H1 (cell line): ENCODE measurements at regions of chr2 and their contacts with region 1.

Region 1: GRCh38 chr2:202238234-202239197 is at the start of gene SUMO1:
- DNase-seq: peak; percentile 82 to 95
- H3K4me3 ChIP-seq: peak within 1 kb of the TSS; percentile 81 to 99 (median 98)
- H3K27ac ChIP-seq: peak within 1 kb of the TSS; percentile 96
- H3K4me1 ChIP-seq: peaks cover 0 to 3% (median 0%) of the 10 kb centered on the region in 4 experiments; a peak in 3 of 7 replicates
- H3K27me3 ChIP-seq: no peaks in the 10 kb centered on the region
- CTCF ChIP-seq: no peak
- EP300 ChIP-seq: no peak
- POLR2A ChIP-seq: peak; percentile 84 to 99
- RAD21 ChIP-seq: no peak
- total RNA-seq, gene SUMO1: 232 and 238 TPM in 2 replicates

Region 2: GRCh38 chr2:202221873-202222272 is 16.6 kb before region 1 on chr2:
- CTCF ChIA-PET with region 1: interaction called, 6 read pairs
- POLR2A ChIA-PET with region 1: interaction called, 19 read pairs
- DNase-seq: no peak
- H3K4me3 ChIP-seq: no peak overlapping the region
- H3K27ac ChIP-seq: no peak overlapping the region
- H3K4me1 ChIP-seq: peaks cover 0 to 3% (median 0%) of the 10 kb centered on the region in 4 experiments; a peak in 2 of 7 replicates
- H3K27me3 ChIP-seq: no peaks in the 10 kb centered on the region
- CTCF ChIP-seq: no peak
- EP300 ChIP-seq: no peak
- POLR2A ChIP-seq: no peak
- RAD21 ChIP-seq: no peak

Region 3: GRCh38 chr2:202249521-202249850 is 11.0 kb after region 1 on chr2:
- CTCF ChIA-PET with region 1: interaction called, 3 read pairs
- POLR2A ChIA-PET with region 1: interaction called, 46 read pairs
- DNase-seq: no peak
- H3K4me3 ChIP-seq: peak overlapping the region in 1 of 4 experiments; percentile 40; a peak in 1 of 8 replicates
- H3K27ac ChIP-seq: peak overlapping the region; percentile 66; the same call in 1 of the 2 replicates
- H3K4me1 ChIP-seq: peaks cover 2 to 8% (median 6%) of the 10 kb centered on the region in 4 experiments; a peak in 6 of 7 replicates
- H3K27me3 ChIP-seq: no peaks in the 10 kb centered on the region
- CTCF ChIP-seq: no peak
- EP300 ChIP-seq: no peak
- POLR2A ChIP-seq: no peak
- RAD21 ChIP-seq: no peak

Region 4: DNA sequence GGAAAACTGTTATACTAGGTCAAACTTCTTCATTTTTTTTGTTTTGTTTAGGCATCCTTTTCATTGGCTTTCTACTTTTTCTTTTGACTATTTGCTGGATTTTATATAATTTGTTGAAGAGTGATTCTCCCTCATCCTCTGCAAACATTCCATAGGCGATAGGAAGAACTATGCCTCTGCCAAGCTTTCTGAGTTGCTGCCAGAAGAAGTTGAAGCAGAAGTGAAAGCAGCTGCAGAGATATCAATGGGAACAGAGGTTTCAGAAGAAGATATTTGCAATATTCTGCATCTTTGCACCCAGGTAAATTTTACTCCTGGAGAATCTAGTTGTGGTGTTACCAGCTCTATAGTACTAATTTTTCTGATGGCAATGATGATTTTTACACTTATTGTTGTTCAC is 52.5 kb after region 1 on chr2:
- CTCF ChIA-PET with region 1: no interaction called
- POLR2A ChIA-PET with region 1: no interaction called
- DNase-seq: no peak
- H3K4me3 ChIP-seq: no peak overlapping the region
- H3K27ac ChIP-seq: no peak overlapping the region
- H3K4me1 ChIP-seq: no peaks in the 10 kb centered on the region
- H3K27me3 ChIP-seq: no peaks in the 10 kb centered on the region
- CTCF ChIP-seq: no peak
- EP300 ChIP-seq: no peak
- POLR2A ChIP-seq: no peak
- RAD21 ChIP-seq: no peak